T-cell (primary cell): ENCODE measurements at regions of chr4 and their contacts with region 1.

Region 1: GRCh38 chr4:165112368-165113139 is at the start of gene TMEM192:
- DNase-seq: peak; percentile 75 to 92 (median 87)
- ATAC-seq: peak; percentile 95 to 98 (median 96)
- H3K4me3 ChIP-seq: peak within 1 kb of the TSS; percentile 74 to 96
- H3K4me3 Mint-ChIP-seq: peak within 1 kb of the TSS; percentile 85 to 95 (median 87)
- H3K27ac ChIP-seq: peak within 1 kb of the TSS; percentile 73
- H3K27ac Mint-ChIP-seq: peak within 1 kb of the TSS; percentile 84 to 93
- H3K4me1 ChIP-seq: peaks cover 4 to 9% of the 10 kb centered on the region in 2 experiments
- H3K4me1 Mint-ChIP-seq: peaks cover 19 to 30% (median 20%) of the 10 kb centered on the region in 3 donors
- H3K27me3 ChIP-seq: peaks cover 0 to 16% of the 10 kb centered on the region in 2 experiments
- H3K27me3 Mint-ChIP-seq: peaks cover 0 to 11% of the 10 kb centered on the region in 2 donors
- total RNA-seq, gene TMEM192: 8.6 to 9.5 (median 9.5) TPM

Region 2: DNA sequence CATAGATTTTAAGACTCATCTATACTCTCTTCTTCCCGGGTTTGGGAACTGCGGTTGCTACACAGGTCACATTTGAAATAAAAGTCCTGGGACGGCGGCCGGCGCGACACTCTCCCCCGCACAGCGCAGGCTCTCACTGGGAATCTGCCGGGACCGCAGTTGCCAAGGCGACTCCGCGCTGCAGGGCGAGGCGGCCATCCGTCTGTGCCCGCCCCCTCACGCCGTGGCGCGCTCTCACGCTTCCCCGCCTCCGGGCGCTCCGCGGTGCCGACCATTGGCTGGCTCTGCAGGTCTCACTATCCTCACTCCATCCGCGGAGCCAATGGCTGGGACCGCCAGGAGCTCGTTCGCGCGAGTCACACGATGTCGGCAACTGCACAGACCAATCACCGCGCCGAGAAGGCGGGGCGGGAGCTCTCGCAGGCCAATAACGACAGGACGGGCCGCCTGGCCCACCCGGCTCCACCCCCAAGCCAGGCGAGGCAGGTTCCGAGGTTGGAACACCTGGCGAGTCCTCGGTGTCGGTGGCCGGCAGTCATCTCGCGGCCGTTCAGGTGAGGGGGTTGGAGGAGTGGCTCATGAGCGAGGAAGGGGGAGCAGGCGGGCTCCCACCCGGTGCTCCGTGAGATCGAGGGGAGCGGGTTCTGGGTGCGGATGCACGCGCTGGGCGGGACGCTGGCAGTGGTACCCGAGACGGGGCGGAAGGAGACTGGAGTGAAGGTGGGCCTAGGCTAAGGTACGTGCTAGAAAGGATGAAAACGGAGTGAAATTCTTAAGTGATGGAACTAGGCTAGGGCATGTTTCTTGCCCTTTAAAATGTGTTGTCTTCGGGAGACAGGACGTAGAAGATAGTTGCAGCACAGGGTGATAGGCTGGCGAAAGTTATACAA is 214.9 kb after region 1 on chr4 and contains the start of gene MSMO1:
- CTCF ChIA-PET with region 1: interaction called, 3 to 17 read pairs
- POLR2A ChIA-PET with region 1: interaction called in 1 of 2 experiments, 7 read pairs
- DNase-seq: peak; percentile 92 to 100 (median 98)
- ATAC-seq: peak; percentile 96 to 98 (median 98)
- H3K4me3 ChIP-seq: peak within 1 kb of the TSS; percentile 87 to 96
- H3K4me3 Mint-ChIP-seq: no peak within 1 kb of the TSS
- H3K27ac ChIP-seq: peak within 1 kb of the TSS; percentile 80
- H3K27ac Mint-ChIP-seq: no peak within 1 kb of the TSS
- H3K4me1 ChIP-seq: peaks cover 16 to 21% of the 10 kb centered on the region in 2 experiments
- H3K4me1 Mint-ChIP-seq: peaks cover 24 to 41% (median 41%) of the 10 kb centered on the region in 3 donors
- H3K27me3 ChIP-seq: no peaks in the 10 kb centered on the region
- H3K27me3 Mint-ChIP-seq: no peaks in the 10 kb centered on the region
- total RNA-seq, gene MSMO1: 11.2 to 25.2 (median 20.6) TPM

Region 3: DNA sequence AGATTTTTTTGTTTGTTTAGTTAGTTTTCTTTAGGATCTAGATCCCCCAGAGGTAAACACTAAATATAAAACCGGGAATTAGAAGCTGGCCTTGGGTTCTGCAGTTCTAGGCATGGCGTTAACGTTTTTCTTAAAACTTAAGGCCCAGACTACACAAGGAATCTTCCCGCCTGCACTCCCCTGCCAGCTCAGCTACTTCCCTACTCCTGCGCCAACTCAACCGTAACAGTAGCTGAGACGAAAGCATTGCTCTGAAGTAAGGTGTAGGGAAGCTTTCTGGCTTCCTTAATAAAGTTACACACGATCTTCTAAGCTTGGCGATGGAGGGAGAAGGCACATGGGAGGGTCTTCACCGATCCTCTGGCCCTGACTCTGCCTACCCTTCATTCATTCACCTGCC is 303.4 kb after region 1 on chr4:
- CTCF ChIA-PET with region 1: no interaction called
- POLR2A ChIA-PET with region 1: interaction called in 1 of 2 experiments, 11 read pairs
- DNase-seq: no peak
- ATAC-seq: no peak
- H3K4me3 ChIP-seq: no peak overlapping the region
- H3K4me3 Mint-ChIP-seq: no peak overlapping the region
- H3K27ac ChIP-seq: no peak overlapping the region
- H3K27ac Mint-ChIP-seq: no peak overlapping the region
- H3K4me1 ChIP-seq: no peaks in the 10 kb centered on the region
- H3K4me1 Mint-ChIP-seq: no peaks in the 10 kb centered on the region
- H3K27me3 ChIP-seq: peaks cover 0 to 2% of the 10 kb centered on the region in 2 experiments
- H3K27me3 Mint-ChIP-seq: peaks cover 9 to 10% of the 10 kb centered on the region in 2 donors